Activated T-helper 2 cell treated with anti-CD3 and anti-CD28 coated beads, Interferon-gamma antibody, Interleukin-2, Interleukin-4, amounts not matched to agents 10 μg/mL and 5 μg/mL and 100 μg/mL, durations not matched to agents 14 hours and 24 hours and 36 hours (primary cell): ENCODE measurements at regions of chr1 and their contacts with region 1.

Region 1: DNA sequence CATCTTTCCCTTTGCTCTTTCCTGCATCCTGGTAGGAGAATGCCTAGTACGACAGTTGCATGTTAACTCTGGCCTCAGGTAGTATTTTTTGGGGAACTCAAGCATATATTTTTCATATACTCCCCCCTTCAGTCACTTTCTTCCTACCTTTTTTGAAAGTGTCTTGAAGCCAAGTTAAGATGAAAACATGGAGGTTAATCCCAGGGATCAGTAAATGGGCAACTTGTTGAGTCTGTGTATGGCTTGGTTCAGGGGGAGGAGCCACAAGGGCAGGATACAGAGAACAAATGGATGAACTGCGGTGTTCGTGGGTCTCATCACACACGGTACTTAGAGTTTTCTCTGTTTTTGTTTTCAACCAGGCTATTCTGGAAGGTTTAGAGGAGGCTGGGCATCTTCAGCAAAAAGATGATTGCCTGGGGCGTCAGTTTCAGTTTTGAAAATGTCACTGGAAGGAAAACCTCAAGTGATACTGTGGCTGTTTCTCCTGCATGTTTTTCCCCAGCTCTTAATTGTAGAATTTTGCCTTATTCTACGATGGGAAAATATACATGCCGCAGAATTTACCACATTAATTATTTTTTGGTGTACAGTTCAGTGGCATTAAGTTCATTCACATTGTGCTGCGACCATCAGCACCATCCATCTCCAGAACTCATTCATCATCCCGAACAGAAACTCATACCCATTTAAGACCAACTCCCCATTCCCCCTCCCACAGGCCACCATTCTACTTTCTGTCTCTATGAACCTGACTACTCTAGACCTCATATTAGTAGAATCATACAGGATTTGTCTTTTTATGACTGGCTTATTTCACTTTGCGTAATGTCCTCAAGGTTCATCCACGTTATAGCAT is 71.5 kb downstream of the MAP10 start:
- DNase-seq: no peak
- H3K4me3 Mint-ChIP-seq: no peak overlapping the region
- H3K27ac Mint-ChIP-seq: peak overlapping the region; percentile 75
- H3K4me1 Mint-ChIP-seq: peaks cover 20% of the 10 kb centered on the region
- H3K27me3 Mint-ChIP-seq: no peaks in the 10 kb centered on the region

Region 2: DNA sequence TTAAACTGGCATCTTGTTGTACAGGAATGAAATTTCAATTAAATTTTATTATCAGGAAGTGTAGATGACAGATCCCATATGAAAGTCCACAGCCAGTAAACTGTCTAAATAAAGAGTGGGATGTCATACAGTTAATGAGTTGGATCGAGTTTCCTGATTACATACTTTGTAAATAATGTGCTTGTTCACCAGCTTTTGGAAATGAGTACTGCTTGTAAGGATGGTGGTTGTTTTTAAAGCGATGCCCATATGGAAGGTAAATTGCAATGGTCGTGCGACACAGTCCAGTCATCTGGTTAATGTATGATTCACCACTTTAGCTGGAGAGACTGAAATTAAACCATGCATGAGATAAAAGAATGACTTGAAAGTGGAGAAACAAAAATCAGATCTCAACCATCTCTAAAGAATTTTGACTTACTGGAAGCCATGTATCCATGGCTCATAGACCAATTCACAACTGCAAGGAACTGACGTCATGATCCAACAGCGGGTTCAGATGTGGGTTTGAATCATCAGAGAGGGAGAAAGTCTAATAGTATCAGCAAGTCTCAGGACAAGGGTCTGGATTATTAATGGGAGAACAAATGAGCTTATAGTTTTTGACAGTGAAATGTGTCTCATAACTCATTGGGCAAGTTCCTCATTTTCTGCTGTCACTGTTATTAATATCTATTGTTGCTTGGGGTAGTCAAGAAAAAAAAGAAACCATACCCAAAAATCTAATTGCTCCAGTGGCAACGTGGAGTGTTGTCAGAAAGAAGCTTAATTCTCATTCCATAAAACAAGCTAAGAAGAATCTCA is 22.5 kb before region 1 on chr1:
- intact Hi-C with region 1: loop called (anchors 1 kb)
- DNase-seq: no peak
- H3K4me3 Mint-ChIP-seq: no peak overlapping the region
- H3K27ac Mint-ChIP-seq: peak overlapping the region; percentile 25
- H3K4me1 Mint-ChIP-seq: peaks cover 9% of the 10 kb centered on the region
- H3K27me3 Mint-ChIP-seq: peaks cover 10% of the 10 kb centered on the region

Region 3: GRCh38 chr1:232891071-232891470 is 14.3 kb after region 1 on chr1:
- intact Hi-C with region 1: loop called (anchors 1 kb)
- DNase-seq: no peak
- H3K4me3 Mint-ChIP-seq: no peak overlapping the region
- H3K27ac Mint-ChIP-seq: peak overlapping the region; percentile 73
- H3K4me1 Mint-ChIP-seq: peaks cover 20% of the 10 kb centered on the region
- H3K27me3 Mint-ChIP-seq: peaks cover 4% of the 10 kb centered on the region

Region 4: GRCh38 chr1:232923739-232924386 is 47.1 kb after region 1 on chr1:
- intact Hi-C with region 1: loop called (anchors 1 kb)
- DNase-seq: peak; percentile 62
- H3K4me3 Mint-ChIP-seq: peak overlapping the region; percentile 32
- H3K27ac Mint-ChIP-seq: peak overlapping the region; percentile 95
- H3K4me1 Mint-ChIP-seq: peaks cover 34% of the 10 kb centered on the region
- H3K27me3 Mint-ChIP-seq: no peaks in the 10 kb centered on the region